ENCODE measurements at regions of chr10 and their contacts with region 1.

Region 1: GRCh38 chr10:70656489-70656888 is 15.8 kb upstream of the ADAMTS14 start:
- DNase-seq: peak; percentile 87
- ATAC-seq: peak; percentile 100
- H3K4me3 Mint-ChIP-seq: no peak overlapping the region
- H3K27ac Mint-ChIP-seq: peak overlapping the region; percentile 16
- H3K4me1 Mint-ChIP-seq: peaks cover 14% of the 10 kb centered on the region
- H3K27me3 Mint-ChIP-seq: peaks cover 13% of the 10 kb centered on the region

Region 2: GRCh38 chr10:69895759-69896158 is 760.7 kb before region 1 on chr10:
- CTCF ChIA-PET with region 1: no interaction called
- POLR2A ChIA-PET with region 1: no interaction called
- intact Hi-C with region 1: no loop called
- DNase-seq: no peak
- ATAC-seq: no peak
- H3K4me3 Mint-ChIP-seq: no peak overlapping the region
- H3K27ac Mint-ChIP-seq: no peak overlapping the region
- H3K4me1 Mint-ChIP-seq: no peaks in the 10 kb centered on the region
- H3K27me3 Mint-ChIP-seq: no peaks in the 10 kb centered on the region

Region 3: DNA sequence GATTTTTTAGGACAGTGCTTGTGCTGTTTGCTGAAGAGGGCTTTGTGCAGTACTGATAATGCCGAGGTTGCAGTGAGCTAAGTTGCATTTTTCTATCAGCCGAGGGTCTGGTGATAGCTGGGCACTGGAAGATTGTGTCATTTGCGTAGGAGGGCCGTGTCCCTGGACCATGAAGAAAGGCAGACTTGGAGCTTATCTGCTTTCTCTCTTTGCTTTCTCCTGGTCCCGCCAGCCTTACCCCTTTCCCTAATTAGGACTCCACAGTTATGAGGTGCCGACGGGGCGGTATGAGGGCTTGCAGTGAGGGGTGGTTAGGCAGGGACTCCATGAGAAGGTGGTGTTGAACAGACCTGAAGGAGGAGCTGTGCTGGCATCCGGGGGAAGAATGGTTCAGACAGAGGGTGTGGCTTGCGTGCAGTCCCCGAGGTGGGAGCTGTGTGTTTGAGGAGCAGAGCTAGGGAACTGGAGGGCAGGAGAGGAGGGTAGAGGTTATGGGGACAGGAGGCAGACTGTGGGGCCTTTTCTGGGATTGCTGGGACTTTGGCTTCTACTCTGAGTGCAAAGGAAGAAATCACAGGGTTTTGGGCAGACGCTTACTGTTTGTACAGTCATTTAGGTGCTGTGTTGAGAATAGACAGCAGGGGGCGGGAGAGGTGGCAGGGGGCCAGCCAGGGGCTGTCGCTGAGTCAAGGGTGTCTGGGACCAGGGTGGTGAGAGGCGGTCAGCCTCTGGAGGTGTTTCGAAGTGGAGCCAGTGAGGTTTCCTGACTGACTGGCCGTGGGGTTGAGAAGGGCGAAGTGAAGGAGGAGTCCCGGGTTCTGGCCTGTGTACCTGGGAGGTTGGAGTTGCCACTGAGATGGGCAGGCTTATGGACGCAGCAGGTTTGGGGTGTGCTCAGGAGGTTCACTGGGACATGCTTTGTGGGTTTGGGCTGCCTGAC is 97.3 kb before region 1 on chr10:
- CTCF ChIA-PET with region 1: interaction called, 3 read pairs
- POLR2A ChIA-PET with region 1: no interaction called
- intact Hi-C with region 1: loop called (anchors 1 to 2 kb)
- DNase-seq: peak; percentile 87
- ATAC-seq: peak; percentile 95
- H3K4me3 Mint-ChIP-seq: peak overlapping the region; percentile 60
- H3K27ac Mint-ChIP-seq: peak overlapping the region; percentile 23
- H3K4me1 Mint-ChIP-seq: peaks cover 12% of the 10 kb centered on the region
- H3K27me3 Mint-ChIP-seq: no peaks in the 10 kb centered on the region

Region 4: DNA sequence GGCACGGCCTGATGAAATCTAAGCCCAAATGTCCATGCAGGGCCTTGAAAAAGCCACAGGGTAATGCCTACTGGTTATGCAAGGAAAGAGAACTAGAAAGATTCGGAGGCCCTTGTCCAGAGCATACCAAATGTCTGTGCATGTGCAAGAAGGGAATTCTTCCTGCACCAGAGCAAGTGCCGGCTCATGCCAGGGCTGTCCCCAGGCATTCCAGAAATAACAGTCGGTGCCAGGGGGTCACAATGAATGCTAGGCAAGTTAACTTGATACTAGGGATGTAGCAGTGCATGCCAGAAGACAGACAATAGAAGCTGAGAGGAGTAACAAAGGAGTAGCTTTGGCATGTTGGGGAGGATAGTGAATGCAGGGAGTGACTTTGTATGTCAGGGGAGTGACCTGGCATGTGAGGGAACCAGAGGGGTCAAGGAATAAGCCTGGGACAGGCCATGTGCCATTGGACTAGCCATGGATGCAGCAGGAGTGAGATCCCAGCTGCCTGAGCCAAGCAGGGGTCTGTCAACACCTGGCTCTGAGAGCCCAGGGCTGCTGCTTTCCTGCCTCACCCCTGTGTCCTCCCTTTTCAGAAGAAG is 436.4 kb after region 1 on chr10:
- CTCF ChIA-PET with region 1: no interaction called
- POLR2A ChIA-PET with region 1: no interaction called
- intact Hi-C with region 1: no loop called
- DNase-seq: no peak
- ATAC-seq: no peak
- H3K4me3 Mint-ChIP-seq: no peak overlapping the region
- H3K27ac Mint-ChIP-seq: no peak overlapping the region
- H3K4me1 Mint-ChIP-seq: peaks cover 15% of the 10 kb centered on the region
- H3K27me3 Mint-ChIP-seq: peaks cover 21% of the 10 kb centered on the region

Region 5: DNA sequence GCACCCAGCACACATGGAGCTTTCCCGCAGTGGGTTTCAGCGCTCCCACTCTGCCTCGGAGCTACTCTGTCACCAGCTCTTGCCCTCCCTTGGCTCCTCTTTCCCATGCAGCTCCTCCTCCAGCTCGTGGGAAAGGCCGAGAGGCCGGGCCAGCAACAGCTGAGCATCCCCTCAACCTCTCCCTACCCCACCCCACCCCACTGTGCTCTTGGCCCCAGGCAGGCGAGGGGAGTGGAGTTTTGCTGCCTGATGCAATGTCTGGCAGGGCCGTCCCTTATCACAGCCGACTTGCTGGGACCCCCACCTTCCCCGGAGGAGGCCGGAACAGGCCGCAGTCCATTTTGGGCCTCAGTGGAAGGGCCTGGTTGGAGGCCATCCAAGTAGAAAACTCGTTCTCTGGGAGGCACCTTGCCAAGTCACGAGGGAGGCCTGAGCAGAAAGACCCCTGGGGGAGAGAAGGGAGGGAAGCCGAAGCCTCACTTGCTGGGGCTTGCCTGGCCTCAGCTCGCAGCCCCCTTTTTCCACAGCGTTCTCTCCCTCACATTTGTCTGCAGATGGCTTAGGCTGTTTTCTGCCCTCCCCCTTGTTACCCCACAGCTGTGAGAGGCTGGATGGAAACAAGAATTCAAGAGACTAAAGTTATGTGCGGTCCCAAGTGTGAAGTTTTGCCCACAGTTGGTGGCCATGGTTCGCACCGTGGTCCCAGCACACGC is 1343.0 kb after region 1 on chr10:
- CTCF ChIA-PET with region 1: no interaction called
- POLR2A ChIA-PET with region 1: no interaction called
- intact Hi-C with region 1: no loop called
- DNase-seq: no peak
- ATAC-seq: no peak
- H3K4me3 Mint-ChIP-seq: no peak overlapping the region
- H3K27ac Mint-ChIP-seq: no peak overlapping the region
- H3K4me1 Mint-ChIP-seq: no peaks in the 10 kb centered on the region
- H3K27me3 Mint-ChIP-seq: no peaks in the 10 kb centered on the region